ENCODE measurements at regions of chr3 and their contacts with region 1.

Region 1: GRCh38 chr3:43442872-43443395 is 156.6 kb downstream of the SNRK start:
- DNase-seq: no peak
- ATAC-seq: no peak
- H3K4me3 ChIP-seq: no peak overlapping the region
- H3K27ac ChIP-seq: no peak overlapping the region
- H3K4me1 ChIP-seq: no peaks in the 10 kb centered on the region
- H3K27me3 ChIP-seq: no peaks in the 10 kb centered on the region
- CTCF ChIP-seq: no peak

Region 2: DNA sequence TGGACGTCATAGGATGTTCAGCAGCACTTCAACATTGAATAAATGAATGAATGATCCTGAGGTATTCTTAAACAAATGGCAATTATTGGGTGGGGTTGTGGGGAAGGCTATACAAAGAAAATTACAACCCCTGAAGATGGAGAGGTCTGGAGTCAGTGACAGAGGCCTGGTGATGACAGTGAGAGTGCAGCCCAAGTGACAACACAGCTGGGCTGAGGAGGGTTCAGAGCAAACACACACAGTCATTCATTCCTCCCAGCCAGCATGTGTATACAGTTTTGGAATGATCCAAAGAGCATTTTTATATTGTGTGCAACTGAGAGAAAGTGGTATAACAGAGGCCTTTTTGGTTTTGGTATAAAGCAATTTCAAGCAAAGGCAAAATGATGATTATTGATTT is 30.8 kb after region 1 on chr3:
- CTCF ChIA-PET with region 1: no interaction called
- POLR2A ChIA-PET with region 1: interaction called, 3 read pairs
- in situ Hi-C with region 1: no loop called
- intact Hi-C with region 1: loop called (anchors 2 kb)
- DNase-seq: no peak
- ATAC-seq: no peak
- H3K4me3 ChIP-seq: no peak overlapping the region
- H3K27ac ChIP-seq: no peak overlapping the region
- H3K4me1 ChIP-seq: no peaks in the 10 kb centered on the region
- H3K27me3 ChIP-seq: no peaks in the 10 kb centered on the region
- CTCF ChIP-seq: no peak